ENCODE measurements at regions of chr14 and their contacts with region 1.

Region 1: DNA sequence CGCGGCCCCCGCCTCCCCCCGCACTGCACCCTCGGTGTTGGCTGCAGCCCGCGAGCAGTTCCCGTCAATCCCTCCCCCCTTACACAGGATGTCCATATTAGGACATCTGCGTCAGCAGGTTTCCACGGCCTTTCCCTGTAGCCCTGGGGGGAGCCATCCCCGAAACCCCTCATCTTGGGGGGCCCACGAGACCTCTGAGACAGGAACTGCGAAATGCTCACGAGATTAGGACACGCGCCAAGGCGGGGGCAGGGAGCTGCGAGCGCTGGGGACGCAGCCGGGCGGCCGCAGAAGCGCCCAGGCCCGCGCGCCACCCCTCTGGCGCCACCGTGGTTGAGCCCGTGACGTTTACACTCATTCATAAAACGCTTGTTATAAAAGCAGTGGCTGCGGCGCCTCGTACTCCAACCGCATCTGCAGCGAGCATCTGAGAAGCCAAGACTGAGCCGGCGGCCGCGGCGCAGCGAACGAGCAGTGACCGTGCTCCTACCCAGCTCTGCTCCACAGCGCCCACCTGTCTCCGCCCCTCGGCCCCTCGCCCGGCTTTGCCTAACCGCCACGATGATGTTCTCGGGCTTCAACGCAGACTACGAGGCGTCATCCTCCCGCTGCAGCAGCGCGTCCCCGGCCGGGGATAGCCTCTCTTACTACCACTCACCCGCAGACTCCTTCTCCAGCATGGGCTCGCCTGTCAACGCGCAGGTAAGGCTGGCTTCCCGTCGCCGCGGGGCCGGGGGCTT is at the start of gene FOS:
- DNase-seq: peak; percentile 95 to 97
- ATAC-seq: peak; percentile 82
- H3K4me3 ChIP-seq: peak within 1 kb of the TSS; percentile 53 to 78
- H3K27ac ChIP-seq: peak within 1 kb of the TSS; percentile 98 to 100
- H3K4me1 ChIP-seq: no peaks in the 10 kb centered on the region
- H3K27me3 ChIP-seq: peaks cover 0 to 2% of the 10 kb centered on the region in 2 donors
- total RNA-seq, gene FOS: 129 to 2,160 TPM

Region 2: GRCh38 chr14:75063407-75064213 is 215.0 kb before region 1 on chr14 and contains the start of gene ACYP1:
- intact Hi-C with region 1: no loop called
- DNase-seq: peak; percentile 94 to 97
- ATAC-seq: peak; percentile 96
- H3K4me3 ChIP-seq: peak within 1 kb of the TSS; percentile 56 to 82
- H3K27ac ChIP-seq: no peak within 1 kb of the TSS
- H3K4me1 ChIP-seq: peaks cover 0 to 2% of the 10 kb centered on the region in 2 donors
- H3K27me3 ChIP-seq: no peaks in the 10 kb centered on the region
- total RNA-seq, gene ACYP1: 10.5 to 23.9 TPM

Region 3: DNA sequence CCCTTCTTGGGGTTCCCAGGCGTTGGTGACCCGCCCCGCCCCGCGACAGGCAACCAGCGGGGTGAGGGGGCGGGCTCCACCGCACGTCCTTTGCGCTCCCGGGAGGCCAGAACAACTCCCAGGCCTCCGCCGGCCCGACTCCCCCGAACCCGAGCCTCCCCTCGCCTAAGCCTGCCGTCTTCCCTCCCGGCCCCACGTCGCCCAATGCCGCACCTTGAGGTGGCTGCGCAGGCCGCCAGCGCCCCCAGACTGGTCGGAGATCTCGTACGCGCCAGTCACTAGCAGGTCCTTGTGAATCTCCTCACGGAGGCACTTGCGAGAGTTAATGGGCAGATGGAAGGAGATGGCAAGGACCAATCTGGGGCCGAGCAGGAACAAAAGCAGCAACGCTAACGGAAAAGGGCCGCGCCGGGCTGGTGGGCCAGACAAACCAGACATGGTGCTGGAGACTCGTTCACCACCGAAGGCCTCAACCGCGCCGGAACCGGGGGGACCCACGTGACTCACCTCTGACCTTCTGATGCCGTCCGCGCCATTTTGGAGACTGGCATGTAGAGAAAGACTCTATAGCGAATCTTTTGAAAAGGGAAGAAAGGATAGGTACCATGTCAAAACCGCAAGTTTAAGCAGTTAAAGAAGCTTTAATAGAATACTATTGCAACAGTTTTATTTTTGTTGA is 102.3 kb before region 1 on chr14 and contains the start of gene TMED10:
- intact Hi-C with region 1: loop called (anchors 1 to 5 kb)
- DNase-seq: peak; percentile 94 to 96
- ATAC-seq: peak; percentile 97
- H3K4me3 ChIP-seq: peak within 1 kb of the TSS; percentile 57 to 60
- H3K27ac ChIP-seq: peak within 1 kb of the TSS; percentile 5 to 92
- H3K4me1 ChIP-seq: peaks cover 2 to 6% of the 10 kb centered on the region in 2 donors
- H3K27me3 ChIP-seq: no peaks in the 10 kb centered on the region
- total RNA-seq, gene TMED10: 249 to 277 TPM

Region 4: GRCh38 chr14:75182841-75183624 is 95.6 kb before region 1 on chr14:
- intact Hi-C with region 1: loop called in 1 of 2 experiments (anchors 5 kb)
- DNase-seq: peak in 1 of 2 donors; percentile 56
- ATAC-seq: peak; percentile 67
- H3K4me3 ChIP-seq: no peak overlapping the region
- H3K27ac ChIP-seq: peak overlapping the region; percentile 93 to 96
- H3K4me1 ChIP-seq: no peaks in the 10 kb centered on the region
- H3K27me3 ChIP-seq: no peaks in the 10 kb centered on the region

Region 5: DNA sequence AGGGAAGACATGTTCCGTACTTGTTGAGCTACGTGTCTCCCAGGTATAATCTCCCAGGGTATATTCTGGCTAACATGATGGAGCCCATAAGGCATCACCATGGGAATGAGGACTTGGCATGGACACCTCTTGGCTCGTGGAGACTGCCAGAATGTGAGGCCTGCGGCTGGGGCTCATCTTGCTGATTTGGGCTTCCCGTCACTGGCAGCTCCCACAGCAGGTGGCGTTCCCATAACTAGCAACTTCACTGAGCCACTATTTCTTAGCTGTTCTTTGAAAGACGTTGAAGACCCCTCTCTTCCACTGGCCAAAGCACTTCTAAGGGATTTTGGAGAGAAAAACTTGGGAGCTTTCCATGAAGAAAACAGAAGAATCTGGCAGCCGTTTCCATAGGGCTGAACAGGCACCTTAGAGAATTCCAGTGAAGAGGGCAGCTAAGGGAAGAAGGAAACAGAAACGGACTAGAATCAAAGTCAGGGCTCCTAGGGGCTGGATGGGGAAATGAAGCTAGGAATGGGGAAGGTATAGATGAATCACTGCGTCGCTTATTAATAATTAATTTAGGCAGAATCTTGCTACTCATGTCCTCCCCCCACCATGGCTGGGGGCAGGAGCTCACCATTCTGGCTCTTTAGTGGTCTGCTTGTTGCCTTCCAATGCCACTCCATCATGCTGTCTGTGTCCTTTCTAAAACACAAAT is 39.7 kb before region 1 on chr14:
- intact Hi-C with region 1: loop called in 1 of 2 experiments (anchors 1 kb)
- DNase-seq: peak in 1 of 2 donors; percentile 79
- ATAC-seq: no peak
- H3K4me3 ChIP-seq: no peak overlapping the region
- H3K27ac ChIP-seq: peak overlapping the region; percentile 91 to 99
- H3K4me1 ChIP-seq: peaks cover 5 to 11% of the 10 kb centered on the region in 2 donors
- H3K27me3 ChIP-seq: no peaks in the 10 kb centered on the region

Region 6: GRCh38 chr14:75258615-75259466 is 19.8 kb before region 1 on chr14:
- intact Hi-C with region 1: loop called in 1 of 2 experiments (anchors 1 kb)
- DNase-seq: peak; percentile 100
- ATAC-seq: peak; percentile 96
- H3K4me3 ChIP-seq: peak overlapping the region; percentile 0 to 15
- H3K27ac ChIP-seq: peak overlapping the region; percentile 73 to 96
- H3K4me1 ChIP-seq: no peaks in the 10 kb centered on the region
- H3K27me3 ChIP-seq: no peaks in the 10 kb centered on the region

Region 7: DNA sequence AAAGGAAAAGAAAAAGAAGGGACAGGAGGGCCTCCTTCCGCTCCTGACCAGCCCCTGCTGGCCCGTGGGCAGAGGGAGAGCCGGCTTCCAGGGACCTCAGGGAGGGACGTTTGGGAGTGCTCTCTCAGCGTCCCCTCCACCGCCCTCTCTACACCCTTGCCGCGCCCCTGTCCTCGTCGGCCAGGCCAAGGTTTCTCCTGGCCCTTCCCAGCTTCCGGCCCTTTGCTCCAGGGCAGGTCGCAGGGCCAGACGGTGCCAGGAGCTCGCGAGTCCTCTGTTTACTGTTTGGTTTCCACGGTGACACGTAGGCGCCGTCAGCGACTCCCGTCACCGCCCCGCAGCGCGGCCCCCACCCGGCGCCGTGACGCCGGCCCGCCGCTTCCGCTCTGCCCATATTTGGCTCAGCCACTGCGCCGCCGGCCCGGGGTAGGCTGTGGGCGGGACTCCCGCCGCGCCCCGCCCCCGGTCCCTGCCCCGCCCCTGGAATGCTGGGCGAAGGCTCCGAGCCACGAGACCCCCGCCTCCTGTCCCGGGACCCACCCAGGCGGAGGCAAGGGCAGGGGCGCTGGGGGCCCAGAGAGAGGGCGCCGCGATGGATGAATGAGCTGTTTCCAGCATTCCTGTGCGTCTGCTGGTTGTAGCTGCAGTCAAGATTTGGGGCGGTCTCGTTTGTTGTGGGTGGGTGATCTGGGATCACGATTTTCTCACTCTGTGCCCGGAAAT is 15.5 kb after region 1 on chr14:
- intact Hi-C with region 1: loop called in 1 of 2 experiments (anchors 2 kb)
- DNase-seq: peak; percentile 97 to 98
- ATAC-seq: peak; percentile 95
- H3K4me3 ChIP-seq: peak overlapping the region; percentile 41 to 47
- H3K27ac ChIP-seq: peak overlapping the region; percentile 0 to 96
- H3K4me1 ChIP-seq: no peaks in the 10 kb centered on the region
- H3K27me3 ChIP-seq: no peaks in the 10 kb centered on the region

Measured in aorta (tissue), 5 donors.